MCF 10A (cell line): ENCODE measurements at regions of chr17 and their contacts with region 1.

Region 1: GRCh38 chr17:31052187-31052889 is 42.4 kb upstream of the NF1 start:
- DNase-seq: peak; percentile 98
- H3K4me3 Mint-ChIP-seq: peak overlapping the region; percentile 65
- H3K27ac Mint-ChIP-seq: peak overlapping the region; percentile 90
- H3K4me1 Mint-ChIP-seq: peaks cover 20% of the 10 kb centered on the region
- H3K27me3 Mint-ChIP-seq: no peaks in the 10 kb centered on the region
- CTCF ChIP-seq: no peak

Region 2: GRCh38 chr17:31068291-31068690 is 16.0 kb after region 1 on chr17:
- CTCF ChIA-PET with region 1: interaction called, 7 read pairs
- POLR2A ChIA-PET with region 1: interaction called, 41 read pairs
- intact Hi-C with region 1: no loop called
- DNase-seq: peak; percentile 55
- H3K4me3 Mint-ChIP-seq: no peak overlapping the region
- H3K27ac Mint-ChIP-seq: peak overlapping the region; percentile 66
- H3K4me1 Mint-ChIP-seq: peaks cover 32% of the 10 kb centered on the region
- H3K27me3 Mint-ChIP-seq: no peaks in the 10 kb centered on the region
- CTCF ChIP-seq: peak; percentile 27

Region 3: GRCh38 chr17:31094600-31095238 is 42.4 kb after region 1 on chr17 and contains the start of gene NF1:
- CTCF ChIA-PET with region 1: no interaction called
- POLR2A ChIA-PET with region 1: interaction called, 37 read pairs
- intact Hi-C with region 1: no loop called
- DNase-seq: peak; percentile 96
- H3K4me3 Mint-ChIP-seq: peak within 1 kb of the TSS; percentile 91
- H3K27ac Mint-ChIP-seq: peak within 1 kb of the TSS; percentile 87
- H3K4me1 Mint-ChIP-seq: peaks cover 16% of the 10 kb centered on the region
- H3K27me3 Mint-ChIP-seq: no peaks in the 10 kb centered on the region
- CTCF ChIP-seq: no peak
- total RNA-seq, gene NF1: 58.5 and 60.2 TPM in 2 replicates

Region 4: DNA sequence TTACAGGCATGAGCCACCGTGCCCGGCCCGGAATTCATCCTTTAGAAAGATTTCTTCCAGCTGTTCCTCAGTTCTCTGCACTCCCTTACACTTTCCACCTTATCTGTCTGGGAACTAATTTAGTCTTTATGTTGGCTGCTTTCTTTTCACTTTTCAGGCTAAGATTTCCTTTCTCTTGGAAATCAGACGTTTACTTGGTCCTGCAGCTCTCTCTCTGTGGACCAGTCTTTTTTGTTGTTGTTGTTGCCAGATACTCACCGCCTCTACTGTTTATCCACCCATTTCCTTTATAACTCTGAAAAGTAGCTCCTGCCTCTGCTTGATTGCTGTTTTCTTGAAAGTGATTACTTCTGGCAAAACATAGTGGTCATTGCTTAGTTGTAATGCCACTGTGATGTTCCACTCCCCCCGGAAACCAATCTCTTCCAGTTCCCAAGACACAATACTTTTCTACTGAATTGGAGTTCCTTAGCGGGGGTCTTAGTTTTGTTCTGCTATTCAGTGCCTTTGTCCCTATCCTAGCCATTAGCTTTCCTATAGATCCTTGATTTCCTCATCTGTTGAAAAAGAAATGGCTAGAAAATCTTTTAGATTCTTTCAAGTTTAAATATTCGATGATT is 48.6 kb after region 1 on chr17:
- CTCF ChIA-PET with region 1: no interaction called
- POLR2A ChIA-PET with region 1: interaction called, 37 read pairs
- intact Hi-C with region 1: no loop called
- DNase-seq: no peak
- H3K4me3 Mint-ChIP-seq: no peak overlapping the region
- H3K27ac Mint-ChIP-seq: no peak overlapping the region
- H3K4me1 Mint-ChIP-seq: peaks cover 19% of the 10 kb centered on the region
- H3K27me3 Mint-ChIP-seq: no peaks in the 10 kb centered on the region
- CTCF ChIP-seq: no peak